ENCODE measurements at regions of chr1 and their contacts with region 1.

Region 1: DNA sequence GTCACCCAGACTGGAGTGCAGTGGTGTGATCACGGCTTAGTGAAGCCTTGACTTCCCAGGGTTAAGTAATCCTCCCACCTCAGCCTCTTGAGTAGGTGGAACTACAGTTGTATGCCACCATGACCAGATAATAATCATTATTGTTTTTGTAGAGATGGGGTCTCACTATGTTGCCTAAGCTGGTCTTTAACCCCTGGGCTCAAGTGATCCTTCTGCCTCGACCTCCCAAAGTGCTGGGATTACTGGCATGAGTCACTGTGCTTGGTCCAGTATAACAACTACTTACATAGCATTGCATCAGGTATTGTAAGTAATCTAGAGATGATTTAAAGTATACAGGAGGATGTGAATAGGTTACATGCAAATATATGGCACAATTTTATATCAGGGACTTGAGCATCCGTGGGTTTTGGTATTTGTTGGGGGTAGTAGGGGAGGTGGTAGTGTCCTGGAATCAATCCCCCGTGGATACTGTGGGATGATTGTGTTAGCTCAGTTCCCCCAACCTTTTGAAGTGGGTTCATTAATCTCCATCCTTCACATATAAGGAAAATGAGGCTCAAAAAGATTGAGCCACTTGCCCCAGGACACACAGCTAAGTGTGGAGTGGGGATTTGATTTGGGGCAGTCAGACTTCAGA is 61.4 kb upstream of the CNIH3 start:
- DNase-seq: no peak
- CTCF ChIP-seq: no peak

Region 2: DNA sequence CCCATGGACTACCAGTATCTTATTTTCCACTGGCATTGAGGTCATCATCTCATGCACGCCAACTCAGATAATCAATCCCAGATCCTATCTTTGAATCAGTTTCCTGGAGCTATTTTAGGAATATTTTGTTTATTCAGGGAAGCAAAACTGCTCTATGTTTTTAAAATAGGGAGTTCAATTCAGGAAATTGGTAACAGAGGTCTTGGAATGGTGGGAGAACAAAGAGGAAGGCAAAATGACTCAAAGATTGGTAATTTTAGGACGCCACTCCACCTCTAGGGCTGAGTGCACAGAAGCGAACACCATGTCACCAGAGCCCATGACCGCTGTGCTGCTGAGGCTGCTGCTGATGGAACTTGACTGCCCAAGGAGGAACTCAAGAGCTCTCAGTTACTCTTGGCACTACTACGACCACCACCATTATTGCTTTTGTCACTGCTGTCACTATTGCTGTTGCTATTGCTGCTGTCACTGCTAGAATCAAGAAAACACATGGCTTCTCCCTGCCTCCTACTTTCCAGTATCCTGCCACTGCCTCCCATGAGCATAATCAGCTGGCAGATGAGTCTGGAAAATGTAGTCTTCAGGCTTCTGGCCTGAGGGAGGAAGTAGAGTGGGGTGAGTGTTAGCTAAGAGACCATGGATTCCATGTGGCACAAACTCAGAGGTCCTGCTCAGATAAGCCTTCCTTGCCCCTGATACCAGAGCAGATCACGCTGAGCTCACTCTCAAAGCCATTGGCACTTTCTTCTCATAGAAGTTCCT is 10.2 kb before region 1 on chr1:
- CTCF ChIA-PET with region 1: interaction called, 10 read pairs
- POLR2A ChIA-PET with region 1: no interaction called
- DNase-seq: no peak
- CTCF ChIP-seq: no peak

Region 3: GRCh38 chr1:225137981-225138380 is 583.2 kb after region 1 on chr1:
- CTCF ChIA-PET with region 1: no interaction called
- POLR2A ChIA-PET with region 1: no interaction called
- DNase-seq: no peak
- CTCF ChIP-seq: no peak

Measured in GM10248 (cell line).